Psoas muscle (tissue), 8 donors: ENCODE measurements at regions of chr9 and their contacts with region 1.

Region 1: GRCh38 chr9:4762108-4762885 is 21.3 kb upstream of the AK3 start:
- DNase-seq: peak; percentile 53 to 77
- ATAC-seq: peak in 3 of 4 donors; percentile 64 to 85 (median 70)
- H3K4me3 ChIP-seq: peak overlapping the region; percentile 37
- H3K27ac ChIP-seq: peak overlapping the region; percentile 47
- H3K4me1 ChIP-seq: peaks cover 11% of the 10 kb centered on the region
- H3K27me3 ChIP-seq: no peaks in the 10 kb centered on the region
- CTCF ChIP-seq: peak; percentile 72

Region 2: GRCh38 chr9:4630836-4631235 is 131.5 kb before region 1 on chr9:
- intact Hi-C with region 1: no loop called
- DNase-seq: no peak
- ATAC-seq: no peak
- H3K4me3 ChIP-seq: no peak overlapping the region
- H3K27ac ChIP-seq: no peak overlapping the region
- H3K4me1 ChIP-seq: no peaks in the 10 kb centered on the region
- H3K27me3 ChIP-seq: no peaks in the 10 kb centered on the region
- CTCF ChIP-seq: no peak

Region 3: GRCh38 chr9:4792572-4793458 is 30.5 kb after region 1 on chr9 and contains the start of gene RCL1:
- intact Hi-C with region 1: loop called in 1 of 2 experiments (anchors 2 kb)
- DNase-seq: peak; percentile 96 to 98
- ATAC-seq: peak; percentile 94 to 98 (median 96)
- H3K4me3 ChIP-seq: peak within 1 kb of the TSS; percentile 78
- H3K27ac ChIP-seq: peak within 1 kb of the TSS; percentile 96
- H3K4me1 ChIP-seq: peaks cover 29% of the 10 kb centered on the region
- H3K27me3 ChIP-seq: no peaks in the 10 kb centered on the region
- CTCF ChIP-seq: no peak
- total RNA-seq, gene RCL1: 16.0 to 29.5 (median 17.9) TPM

Region 4: GRCh38 chr9:5062631-5063030 is 300.3 kb after region 1 on chr9:
- intact Hi-C with region 1: loop called in 1 of 2 experiments (anchors 10 kb)
- DNase-seq: no peak
- ATAC-seq: peak in 1 of 4 donors; percentile 36
- H3K4me3 ChIP-seq: no peak overlapping the region
- H3K27ac ChIP-seq: no peak overlapping the region
- H3K4me1 ChIP-seq: no peaks in the 10 kb centered on the region
- H3K27me3 ChIP-seq: no peaks in the 10 kb centered on the region
- CTCF ChIP-seq: no peak

Region 5: DNA sequence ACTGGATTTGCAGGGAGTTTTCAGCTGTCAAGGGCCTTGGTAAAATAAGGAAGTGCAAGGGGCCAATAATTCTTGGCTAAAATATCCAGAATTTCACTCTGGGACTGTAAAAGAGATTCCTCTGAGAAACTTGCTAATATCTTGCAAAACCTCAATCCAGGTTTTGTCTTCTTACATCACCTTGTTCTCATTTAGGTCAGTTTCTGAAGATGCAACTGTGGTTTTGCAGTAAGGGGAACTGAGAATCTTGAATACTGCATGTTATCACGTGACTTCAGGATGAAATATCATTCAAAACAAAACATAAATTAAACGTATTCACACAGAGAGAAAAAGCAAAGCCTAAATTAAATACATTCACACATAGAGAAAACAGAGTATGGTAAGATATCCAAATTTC is 831.6 kb after region 1 on chr9:
- intact Hi-C with region 1: loop called in 1 of 2 experiments (anchors 10 kb)
- DNase-seq: no peak
- ATAC-seq: no peak
- H3K4me3 ChIP-seq: no peak overlapping the region
- H3K27ac ChIP-seq: no peak overlapping the region
- H3K4me1 ChIP-seq: peaks cover 5% of the 10 kb centered on the region
- H3K27me3 ChIP-seq: no peaks in the 10 kb centered on the region
- CTCF ChIP-seq: no peak